Activated CD4-positive, alpha-beta T cell treated with anti-CD3 and anti-CD28 coated beads for 36 hours (primary cell): ENCODE measurements at regions of chr1 and their contacts with region 1.

Region 1: DNA sequence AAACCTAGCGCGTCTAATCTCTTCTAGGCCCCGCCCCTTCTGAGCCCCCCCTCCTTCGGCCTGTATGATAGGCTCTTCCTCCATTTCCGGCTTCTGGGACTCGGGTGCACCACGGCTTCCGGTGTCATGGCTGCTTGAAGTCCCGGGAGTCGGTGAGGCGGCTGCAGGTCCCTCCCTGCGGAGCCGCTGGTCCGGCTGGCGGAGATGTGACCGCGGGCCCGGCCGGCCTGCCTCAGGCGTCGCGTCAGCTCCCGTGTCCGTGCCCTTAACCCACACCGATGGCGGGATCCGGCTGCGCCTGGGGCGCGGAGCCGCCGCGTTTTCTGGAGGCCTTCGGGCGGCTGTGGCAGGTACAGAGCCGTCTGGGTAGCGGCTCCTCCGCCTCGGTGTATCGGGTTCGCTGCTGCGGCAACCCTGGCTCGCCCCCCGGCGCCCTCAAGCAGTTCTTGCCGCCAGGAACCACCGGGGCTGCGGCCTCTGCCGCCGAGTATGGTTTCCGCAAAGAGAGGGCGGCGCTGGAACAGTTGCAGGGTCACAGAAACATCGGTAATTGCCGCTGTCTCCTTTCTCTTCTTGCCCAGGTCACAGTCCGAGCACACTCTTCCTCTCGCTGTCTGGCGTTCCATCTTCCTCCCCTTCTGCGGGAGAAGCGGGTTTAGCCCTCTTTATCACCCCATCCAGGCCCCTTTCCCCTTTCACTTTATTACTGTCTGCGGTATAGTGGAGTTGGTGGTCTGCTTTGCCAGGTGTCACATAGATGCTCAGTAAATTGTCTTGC is at the start of gene UHMK1:
- DNase-seq: peak; percentile 95
- ATAC-seq: peak; percentile 98
- H3K4me3 Mint-ChIP-seq: peak within 1 kb of the TSS; percentile 93
- H3K27ac Mint-ChIP-seq: peak within 1 kb of the TSS; percentile 95
- H3K4me1 Mint-ChIP-seq: peaks cover 38% of the 10 kb centered on the region
- H3K27me3 Mint-ChIP-seq: no peaks in the 10 kb centered on the region
- total RNA-seq, gene UHMK1: 35.1 to 48.1 TPM

Region 2: GRCh38 chr1:161962091-161962887 is 535.6 kb before region 1 on chr1:
- CTCF ChIA-PET with region 1: no interaction called
- POLR2A ChIA-PET with region 1: no interaction called
- intact Hi-C with region 1: loop called (anchors 2 to 10 kb)
- DNase-seq: peak; percentile 69
- ATAC-seq: peak; percentile 96
- H3K4me3 Mint-ChIP-seq: peak overlapping the region; percentile 57
- H3K27ac Mint-ChIP-seq: peak overlapping the region; percentile 95
- H3K4me1 Mint-ChIP-seq: peaks cover 59% of the 10 kb centered on the region
- H3K27me3 Mint-ChIP-seq: no peaks in the 10 kb centered on the region

Region 3: DNA sequence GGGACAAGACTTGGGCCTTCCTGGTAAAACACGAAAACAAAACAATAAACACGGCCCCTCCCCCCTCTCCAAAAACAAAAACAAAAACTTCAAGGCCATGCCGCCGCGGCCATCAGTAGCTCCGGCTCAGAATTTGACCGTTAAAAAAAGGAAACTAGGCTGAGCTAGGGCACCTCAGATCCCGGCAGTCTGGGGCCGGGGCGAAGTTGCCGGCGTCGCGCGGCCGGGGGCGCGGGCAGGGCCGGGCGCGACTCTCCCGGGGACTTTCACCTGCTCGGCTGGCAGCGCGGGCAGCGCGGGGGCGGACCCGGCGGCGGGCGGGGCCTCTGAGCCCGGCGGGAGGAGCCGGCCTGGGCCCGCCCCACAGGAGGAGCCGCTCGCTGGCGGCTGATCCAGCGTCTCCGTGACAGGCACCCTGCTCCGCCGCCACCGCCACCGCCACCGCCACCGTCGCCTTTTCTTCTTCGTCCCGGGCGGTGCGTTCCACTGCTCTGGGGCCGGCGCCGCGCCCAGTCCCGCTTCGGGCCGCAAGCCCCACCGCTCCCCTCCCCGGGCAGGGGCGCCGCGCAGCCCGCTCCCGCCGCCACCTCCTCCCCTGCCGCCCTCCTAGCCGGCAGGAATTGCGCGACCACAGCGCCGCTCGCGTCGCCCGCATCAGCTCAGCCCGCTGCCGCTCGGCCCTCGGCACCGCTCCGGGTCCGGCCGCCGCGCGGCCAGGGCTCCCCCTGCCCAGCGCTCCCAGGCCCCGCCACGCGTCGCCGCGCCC is 428.4 kb before region 1 on chr1 and contains the start of gene NOS1AP:
- CTCF ChIA-PET with region 1: no interaction called
- POLR2A ChIA-PET with region 1: no interaction called
- intact Hi-C with region 1: loop called in 1 of 2 experiments (anchors 2 kb)
- DNase-seq: peak; percentile 91
- ATAC-seq: peak; percentile 99
- H3K4me3 Mint-ChIP-seq: peak within 1 kb of the TSS; percentile 71
- H3K27ac Mint-ChIP-seq: no peak within 1 kb of the TSS
- H3K4me1 Mint-ChIP-seq: no peaks in the 10 kb centered on the region
- H3K27me3 Mint-ChIP-seq: peaks cover 46% of the 10 kb centered on the region
- total RNA-seq, gene NOS1AP: 0.34 to 0.35 TPM

Region 4: GRCh38 chr1:162561037-162561616 is 63.2 kb after region 1 on chr1:
- CTCF ChIA-PET with region 1: interaction called, 6 read pairs
- POLR2A ChIA-PET with region 1: no interaction called
- intact Hi-C with region 1: loop called (anchors 1 kb)
- DNase-seq: peak; percentile 99
- ATAC-seq: peak; percentile 98
- H3K4me3 Mint-ChIP-seq: peak overlapping the region; percentile 79
- H3K27ac Mint-ChIP-seq: peak overlapping the region; percentile 94
- H3K4me1 Mint-ChIP-seq: peaks cover 35% of the 10 kb centered on the region
- H3K27me3 Mint-ChIP-seq: no peaks in the 10 kb centered on the region

Region 5: GRCh38 chr1:162782671-162783070 is 284.8 kb after region 1 on chr1:
- CTCF ChIA-PET with region 1: interaction called, 3 read pairs
- POLR2A ChIA-PET with region 1: no interaction called
- intact Hi-C with region 1: loop called in 1 of 2 experiments (anchors 10 kb)
- DNase-seq: no peak
- ATAC-seq: no peak
- H3K4me3 Mint-ChIP-seq: no peak overlapping the region
- H3K27ac Mint-ChIP-seq: no peak overlapping the region
- H3K4me1 Mint-ChIP-seq: no peaks in the 10 kb centered on the region
- H3K27me3 Mint-ChIP-seq: peaks cover 15% of the 10 kb centered on the region

Region 6: DNA sequence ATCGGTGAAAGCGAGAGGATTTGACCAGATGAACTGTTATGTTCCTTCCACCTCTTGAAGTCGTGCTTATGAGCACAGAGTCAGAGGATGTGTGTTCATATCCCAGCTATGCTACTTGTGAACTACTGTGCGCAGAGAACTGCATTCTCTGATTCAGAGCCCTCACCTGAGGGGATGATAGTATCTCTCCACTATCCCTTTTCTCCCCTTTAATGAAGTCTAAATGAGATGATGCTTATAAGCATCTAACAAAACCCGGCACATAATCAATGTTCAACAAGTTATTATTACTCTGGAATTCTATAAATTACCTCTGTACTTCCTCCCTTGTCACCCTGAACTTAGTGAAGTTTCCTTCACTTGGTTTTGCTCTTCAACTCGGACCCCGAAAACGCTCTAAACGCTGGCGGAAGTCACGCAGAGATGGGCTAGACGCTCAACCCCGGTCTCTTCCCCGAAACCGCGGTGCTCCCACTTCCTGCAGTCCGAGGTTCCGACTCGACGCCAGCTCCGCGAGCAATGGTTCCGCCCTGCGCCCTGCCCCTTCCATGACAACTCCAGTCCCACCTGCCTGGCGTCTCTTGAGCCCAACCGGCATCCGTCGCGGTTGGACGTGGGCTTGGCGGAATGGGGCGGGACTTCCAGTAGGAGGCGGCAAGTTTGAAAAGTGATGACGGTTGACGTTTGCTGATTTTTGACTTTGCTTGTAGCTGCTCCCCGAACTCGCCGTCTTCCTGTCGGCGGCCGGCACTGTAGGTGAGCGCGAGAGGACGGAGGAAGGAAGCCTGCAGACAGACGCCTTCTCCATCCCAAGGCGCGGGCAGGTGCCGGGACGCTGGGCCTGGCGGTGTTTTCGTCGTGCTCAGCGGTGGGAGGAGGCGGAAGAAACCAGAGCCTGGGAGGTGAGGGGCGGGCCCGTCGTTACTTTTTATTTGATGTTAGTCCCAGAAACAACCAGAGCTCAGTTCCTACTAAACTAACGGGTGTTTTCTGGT is 823.7 kb after region 1 on chr1 and contains the start of gene NUF2:
- CTCF ChIA-PET with region 1: no interaction called
- POLR2A ChIA-PET with region 1: no interaction called
- intact Hi-C with region 1: loop called in 1 of 2 experiments (anchors 1 kb)
- DNase-seq: peak; percentile 98
- ATAC-seq: peak; percentile 93
- H3K4me3 Mint-ChIP-seq: peak within 1 kb of the TSS; percentile 89
- H3K27ac Mint-ChIP-seq: peak within 1 kb of the TSS; percentile 98
- H3K4me1 Mint-ChIP-seq: peaks cover 8% of the 10 kb centered on the region
- H3K27me3 Mint-ChIP-seq: no peaks in the 10 kb centered on the region
- total RNA-seq, gene NUF2: 57.6 to 58.4 TPM